Natural killer cell (primary cell): ENCODE measurements at regions of chr14 and their contacts with region 1.

Region 1: GRCh38 chr14:92615451-92615850 is 101.9 kb downstream of the RIN3 start:
- DNase-seq: peak; percentile 75 to 93
- ATAC-seq: peak; percentile 85 to 97 (median 93)
- H3K4me3 ChIP-seq: no peak overlapping the region
- H3K4me3 Mint-ChIP-seq: peak overlapping the region; percentile 87
- H3K27ac ChIP-seq: peak overlapping the region; percentile 99
- H3K27ac Mint-ChIP-seq: peak overlapping the region; percentile 97 to 100
- H3K4me1 ChIP-seq: peaks cover 63% of the 10 kb centered on the region
- H3K4me1 Mint-ChIP-seq: peaks cover 67 to 72% of the 10 kb centered on the region in 2 donors
- H3K27me3 ChIP-seq: no peaks in the 10 kb centered on the region
- H3K27me3 Mint-ChIP-seq: no peaks in the 10 kb centered on the region
- CTCF ChIP-seq: no peak

Region 2: DNA sequence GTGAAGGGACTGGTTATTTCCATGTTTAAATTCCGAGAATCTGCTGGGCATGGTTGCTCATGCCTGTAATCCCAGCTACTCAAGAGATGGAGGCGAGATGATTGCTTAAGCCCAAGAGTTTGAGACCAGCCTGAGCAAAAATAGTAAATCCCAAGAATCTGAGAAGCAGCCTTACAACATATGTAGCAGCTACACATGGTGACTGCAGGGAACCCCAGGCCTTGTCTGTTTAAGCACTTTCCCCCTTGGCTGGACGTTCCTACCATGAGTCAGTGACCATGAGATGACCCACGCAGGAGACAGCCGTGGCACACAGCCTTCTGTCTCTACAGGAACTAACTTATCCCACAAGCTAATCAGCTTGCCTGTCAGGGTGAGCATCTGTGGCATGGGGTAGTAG is 297.9 kb before region 1 on chr14:
- intact Hi-C with region 1: no loop called
- DNase-seq: no peak
- ATAC-seq: no peak
- H3K4me3 ChIP-seq: no peak overlapping the region
- H3K4me3 Mint-ChIP-seq: no peak overlapping the region
- H3K27ac ChIP-seq: no peak overlapping the region
- H3K27ac Mint-ChIP-seq: no peak overlapping the region
- H3K4me1 ChIP-seq: no peaks in the 10 kb centered on the region
- H3K4me1 Mint-ChIP-seq: peaks cover 4% of the 10 kb centered on the region in 2 donors
- H3K27me3 ChIP-seq: peaks cover 7% of the 10 kb centered on the region
- H3K27me3 Mint-ChIP-seq: peaks cover 29 to 35% of the 10 kb centered on the region in 2 donors
- CTCF ChIP-seq: no peak

Region 3: GRCh38 chr14:92603309-92604242 is 11.9 kb before region 1 on chr14:
- intact Hi-C with region 1: loop called (anchors 2 kb)
- DNase-seq: peak; percentile 49 to 83
- ATAC-seq: peak; percentile 69 to 76 (median 70)
- H3K4me3 ChIP-seq: no peak overlapping the region
- H3K4me3 Mint-ChIP-seq: peak overlapping the region; percentile 40
- H3K27ac ChIP-seq: peak overlapping the region; percentile 1
- H3K27ac Mint-ChIP-seq: peak overlapping the region; percentile 62 to 66
- H3K4me1 ChIP-seq: peaks cover 55% of the 10 kb centered on the region
- H3K4me1 Mint-ChIP-seq: peaks cover 43 to 67% of the 10 kb centered on the region in 2 donors
- H3K27me3 ChIP-seq: no peaks in the 10 kb centered on the region
- H3K27me3 Mint-ChIP-seq: no peaks in the 10 kb centered on the region
- CTCF ChIP-seq: peak; percentile 42

Region 4: DNA sequence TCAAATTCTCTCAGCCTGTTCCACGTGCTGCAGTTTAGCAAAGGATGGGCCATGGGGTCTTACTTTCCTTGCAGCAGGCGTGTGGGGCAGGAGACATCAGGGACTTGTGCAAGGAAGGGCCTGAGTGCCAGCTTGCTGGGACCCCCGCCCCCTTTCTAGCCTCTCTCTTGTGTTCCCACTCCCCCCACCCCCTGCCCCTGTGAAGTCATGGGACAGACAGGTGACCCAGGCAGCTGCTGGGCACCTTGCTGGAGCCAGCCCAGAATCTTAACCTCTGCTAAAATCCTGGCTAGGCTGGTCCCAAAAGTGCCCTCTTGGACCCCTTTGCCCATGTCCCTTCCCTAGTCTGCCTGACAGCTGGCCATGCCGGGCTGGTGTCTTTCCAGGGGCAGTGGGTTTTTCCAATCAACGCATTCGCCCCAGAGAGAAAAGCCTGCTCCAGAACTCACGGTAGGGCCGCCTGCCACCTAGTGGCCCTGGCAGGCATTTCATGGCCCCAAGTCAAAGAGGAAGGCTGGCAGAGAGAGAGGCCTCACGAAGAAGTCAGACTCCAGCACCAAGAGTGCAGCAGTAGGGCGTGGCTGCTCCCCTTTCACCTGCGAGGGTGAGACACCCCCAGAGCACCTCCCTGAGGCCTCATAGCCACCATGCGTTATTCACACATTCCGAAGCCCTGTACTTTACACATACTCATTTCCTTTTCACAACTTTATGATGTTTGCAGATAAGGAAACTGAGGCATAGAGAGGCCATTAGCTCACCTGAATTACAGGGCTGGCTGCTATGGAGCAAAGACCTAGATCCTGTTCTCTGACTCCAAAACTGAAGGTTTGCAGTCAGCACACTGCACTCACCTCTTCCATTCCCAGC is 65.6 kb after region 1 on chr14:
- intact Hi-C with region 1: loop called (anchors 2 kb)
- DNase-seq: peak; percentile 74 to 89
- ATAC-seq: peak; percentile 85 to 87 (median 87)
- H3K4me3 ChIP-seq: no peak overlapping the region
- H3K4me3 Mint-ChIP-seq: peak overlapping the region; percentile 42
- H3K27ac ChIP-seq: peak overlapping the region; percentile 69
- H3K27ac Mint-ChIP-seq: peak overlapping the region; percentile 91
- H3K4me1 ChIP-seq: peaks cover 43% of the 10 kb centered on the region
- H3K4me1 Mint-ChIP-seq: peaks cover 34 to 51% of the 10 kb centered on the region in 2 donors
- H3K27me3 ChIP-seq: no peaks in the 10 kb centered on the region
- H3K27me3 Mint-ChIP-seq: no peaks in the 10 kb centered on the region
- CTCF ChIP-seq: peak; percentile 87

Region 5: GRCh38 chr14:92800525-92800924 is 185.1 kb after region 1 on chr14:
- intact Hi-C with region 1: no loop called
- DNase-seq: no peak
- ATAC-seq: no peak
- H3K4me3 ChIP-seq: no peak overlapping the region
- H3K4me3 Mint-ChIP-seq: peak overlapping the region; percentile 7
- H3K27ac ChIP-seq: no peak overlapping the region
- H3K27ac Mint-ChIP-seq: peak overlapping the region; percentile 32 to 67
- H3K4me1 ChIP-seq: no peaks in the 10 kb centered on the region
- H3K4me1 Mint-ChIP-seq: peaks cover 58 to 60% of the 10 kb centered on the region in 2 donors
- H3K27me3 ChIP-seq: no peaks in the 10 kb centered on the region
- H3K27me3 Mint-ChIP-seq: no peaks in the 10 kb centered on the region
- CTCF ChIP-seq: no peak